Common myeloid progenitor, CD34-positive (primary cell): ENCODE measurements at regions of chr19 and their contacts with region 1.

Region 1: DNA sequence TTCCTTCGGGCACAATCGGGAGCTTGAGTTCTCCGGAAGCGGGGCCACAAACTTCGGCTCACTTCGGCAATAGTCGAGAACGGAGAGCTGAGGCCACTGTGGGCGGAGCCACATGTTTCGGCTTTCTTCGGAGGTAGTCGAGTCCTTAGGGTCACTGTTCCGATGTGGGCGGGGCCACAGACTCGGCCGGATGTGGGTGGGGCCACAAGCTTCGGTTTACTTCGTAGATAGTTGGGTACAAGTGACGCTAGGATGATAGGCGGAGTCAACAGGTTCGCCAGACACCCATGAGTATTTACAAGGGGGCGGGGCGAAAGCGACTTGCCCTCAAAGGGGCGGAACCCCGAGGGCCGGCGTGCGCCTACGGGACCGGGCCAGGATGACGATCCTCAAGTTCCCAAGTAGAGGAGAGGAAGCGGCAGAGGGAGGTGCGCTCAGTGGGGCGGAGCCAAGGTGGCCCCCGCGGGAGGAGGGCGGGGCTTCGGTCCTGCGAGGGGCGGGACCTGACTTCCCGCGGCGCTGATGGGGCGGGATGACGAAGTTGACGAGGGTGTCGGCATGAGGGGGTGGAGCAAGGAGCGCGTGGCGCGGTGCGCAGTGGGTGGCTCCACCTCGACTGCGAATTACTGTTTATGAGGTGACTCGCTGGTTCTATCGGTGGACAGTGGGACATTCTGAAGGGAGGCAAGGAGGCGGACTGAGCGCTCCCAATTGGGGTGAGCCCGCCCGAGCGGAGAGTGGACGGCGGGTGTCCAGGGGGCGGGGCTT is 539 bp upstream of the MBOAT7 start:
- DNase-seq: peak; percentile 100
- H3K4me3 ChIP-seq: peak overlapping the region; percentile 67 to 94 (median 89)
- H3K27ac ChIP-seq: peak overlapping the region; percentile 96 to 98
- H3K4me1 ChIP-seq: peaks cover 4 to 37% (median 32%) of the 10 kb centered on the region in 4 experiments
- H3K27me3 ChIP-seq: no peaks in the 10 kb centered on the region

Region 2: DNA sequence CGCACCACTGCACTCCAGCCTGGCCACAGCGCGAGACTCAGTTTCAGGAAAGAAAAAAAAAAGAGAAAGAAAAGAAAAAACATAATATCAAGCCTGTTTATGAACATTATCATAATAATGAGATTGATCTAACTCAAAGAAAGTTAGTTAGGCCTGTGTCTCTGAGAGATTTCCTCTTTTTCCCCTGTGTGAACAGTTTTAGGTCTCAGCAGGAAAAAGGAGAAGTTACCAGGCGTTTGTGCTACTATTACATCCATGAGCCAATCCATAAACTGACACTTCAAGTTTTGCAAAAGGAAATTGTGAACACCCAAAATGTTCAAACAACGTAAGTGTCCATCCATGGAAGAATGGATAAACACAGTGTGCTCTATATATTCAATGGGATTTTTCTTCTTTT is 112.6 kb before region 1 on chr19:
- CTCF ChIA-PET with region 1: no interaction called
- POLR2A ChIA-PET with region 1: no interaction called
- DNase-seq: peak in 2 of 3 donors; percentile 71 to 72
- H3K4me3 ChIP-seq: no peak overlapping the region
- H3K27ac ChIP-seq: no peak overlapping the region
- H3K4me1 ChIP-seq: peaks cover 0 to 8% (median 5%) of the 10 kb centered on the region in 4 experiments
- H3K27me3 ChIP-seq: peaks cover 0 to 2% (median 0%) of the 10 kb centered on the region in 5 experiments

Region 3: GRCh38 chr19:54159352-54160181 is 30.4 kb before region 1 on chr19 and contains the start of gene LENG1:
- CTCF ChIA-PET with region 1: interaction called, 4 read pairs
- POLR2A ChIA-PET with region 1: interaction called, 10 read pairs
- DNase-seq: peak; percentile 100
- H3K4me3 ChIP-seq: peak within 1 kb of the TSS; percentile 54 to 94 (median 83)
- H3K27ac ChIP-seq: peak within 1 kb of the TSS; percentile 70 to 90
- H3K4me1 ChIP-seq: peaks cover 5 to 58% (median 43%) of the 10 kb centered on the region in 4 experiments
- H3K27me3 ChIP-seq: peaks cover 0 to 10% (median 0%) of the 10 kb centered on the region in 5 experiments

Region 4: DNA sequence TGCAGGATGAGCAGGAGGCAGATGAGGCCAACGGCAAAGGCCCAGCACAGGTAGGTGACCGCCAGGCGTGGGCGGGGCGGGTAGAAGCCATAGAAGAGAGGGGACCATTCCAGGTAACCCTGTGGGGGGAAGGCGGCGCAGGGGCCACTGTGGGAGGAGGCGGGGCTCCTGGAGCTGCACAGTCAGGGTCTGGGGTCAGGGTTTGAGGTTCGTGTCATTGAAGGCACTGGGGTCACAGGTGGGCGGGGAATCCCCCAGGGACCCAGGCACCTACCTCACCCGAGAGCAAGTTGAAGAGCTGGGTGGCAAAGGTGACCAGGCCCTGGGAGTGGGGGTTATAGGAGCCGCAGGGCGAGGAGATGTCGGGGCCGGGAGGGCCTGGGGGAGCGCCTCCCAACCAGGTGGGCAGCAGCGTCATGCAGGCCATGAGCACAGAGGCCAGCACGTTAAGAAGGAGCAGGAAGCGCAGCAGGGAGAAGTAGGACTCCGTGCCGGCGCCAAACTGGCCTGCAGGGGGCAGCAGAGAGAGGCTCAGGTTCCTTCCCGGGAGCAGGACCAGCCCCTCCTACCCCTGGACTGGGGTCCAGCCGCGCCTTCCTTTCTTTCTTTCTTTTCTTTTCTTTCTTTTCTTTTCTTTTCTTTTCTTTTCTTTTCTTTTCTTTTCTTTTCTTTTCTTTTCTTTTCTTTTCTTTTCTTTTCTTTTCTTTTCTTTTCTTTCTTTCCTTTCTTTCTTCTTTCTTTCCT is 21.6 kb before region 1 on chr19:
- CTCF ChIA-PET with region 1: interaction called, 28 read pairs
- POLR2A ChIA-PET with region 1: interaction called, 5 read pairs
- DNase-seq: peak; percentile 81 to 86 (median 85)
- H3K4me3 ChIP-seq: no peak overlapping the region
- H3K27ac ChIP-seq: no peak overlapping the region
- H3K4me1 ChIP-seq: peaks cover 0 to 23% (median 19%) of the 10 kb centered on the region in 4 experiments
- H3K27me3 ChIP-seq: peaks cover 0 to 10% (median 0%) of the 10 kb centered on the region in 5 experiments

Region 5: DNA sequence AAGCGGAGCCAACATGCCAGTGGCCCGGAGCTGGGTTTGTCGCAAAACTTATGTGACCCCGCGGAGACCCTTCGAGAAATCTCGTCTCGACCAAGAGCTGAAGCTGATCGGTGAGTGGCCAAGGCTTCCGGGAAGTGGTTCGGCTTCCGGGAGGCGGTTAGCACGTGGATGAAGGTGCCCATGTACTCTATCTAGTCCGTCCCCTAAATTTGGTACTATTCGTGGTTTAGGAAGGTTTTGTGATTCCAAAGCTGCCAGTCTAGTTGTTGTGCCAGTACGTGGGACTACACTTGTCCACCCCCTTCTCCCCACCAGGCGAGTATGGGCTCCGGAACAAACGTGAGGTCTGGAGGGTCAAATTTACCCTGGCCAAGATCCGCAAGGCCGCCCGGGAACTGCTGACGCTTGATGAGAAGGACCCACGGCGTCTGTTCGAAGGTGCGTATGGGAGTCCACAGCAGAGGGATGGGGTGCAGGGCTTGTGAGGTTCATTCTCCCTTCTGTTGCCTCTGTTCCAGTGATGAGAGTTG is 11.3 kb after region 1 on chr19:
- CTCF ChIA-PET with region 1: interaction called, 24 read pairs
- POLR2A ChIA-PET with region 1: interaction called, 28 read pairs
- DNase-seq: no peak
- H3K4me3 ChIP-seq: peak overlapping the region; percentile 39 to 96 (median 90)
- H3K27ac ChIP-seq: peak overlapping the region; percentile 96 to 97
- H3K4me1 ChIP-seq: peaks cover 17 to 62% (median 56%) of the 10 kb centered on the region in 4 experiments
- H3K27me3 ChIP-seq: no peaks in the 10 kb centered on the region

Region 6: GRCh38 chr19:54209811-54210494 is 20.0 kb after region 1 on chr19:
- CTCF ChIA-PET with region 1: interaction called, 24 read pairs
- POLR2A ChIA-PET with region 1: interaction called, 95 read pairs
- DNase-seq: peak; percentile 90 to 95 (median 93)
- H3K4me3 ChIP-seq: peak overlapping the region in 5 of 7 experiments; percentile 13 to 57 (median 21)
- H3K27ac ChIP-seq: peak overlapping the region; percentile 85 to 86
- H3K4me1 ChIP-seq: peaks cover 22 to 79% (median 67%) of the 10 kb centered on the region in 4 experiments
- H3K27me3 ChIP-seq: no peaks in the 10 kb centered on the region